WTC11 (cell line): ENCODE measurements at regions of chr22 and their contacts with region 1.

Region 1: DNA sequence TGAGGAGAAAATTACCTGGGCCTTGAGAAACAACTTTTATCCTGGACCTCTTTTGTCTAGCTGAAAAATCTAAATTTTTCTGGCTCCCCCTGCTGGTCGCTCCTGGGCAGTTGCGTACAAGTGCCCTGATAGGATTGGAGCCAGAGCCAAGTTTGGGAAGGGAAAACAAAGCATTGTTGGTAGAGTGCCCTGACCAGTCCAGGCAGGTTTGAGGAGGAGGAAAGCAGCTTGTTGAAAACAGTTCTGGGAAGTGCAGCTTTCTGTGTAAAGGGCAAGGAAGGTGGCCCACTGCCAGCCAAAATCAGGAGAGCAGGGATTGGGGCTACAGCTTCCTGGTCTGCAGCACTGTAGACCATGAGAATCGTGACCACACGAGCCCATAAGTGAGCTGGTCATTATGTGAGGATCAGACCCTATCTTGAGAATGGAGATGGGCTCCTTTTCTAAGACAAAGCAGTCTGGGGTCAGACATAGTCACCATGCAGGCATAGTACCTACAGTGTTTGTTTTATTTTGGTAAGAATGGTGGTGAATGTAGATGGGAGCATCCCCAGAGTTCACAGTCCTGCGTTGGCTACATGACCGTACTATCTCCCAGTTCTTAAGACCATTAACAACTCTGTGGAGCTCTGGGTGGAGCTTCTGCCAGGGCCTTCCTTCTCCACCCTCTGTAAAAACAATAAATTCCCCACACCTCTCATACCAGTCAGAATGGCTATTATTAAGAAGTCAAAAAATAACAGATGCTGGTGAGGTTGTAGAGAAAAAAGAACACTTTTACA is 21.3 kb upstream of the PIK3IP1 start:
- DNase-seq: peak; percentile 80
- ATAC-seq: peak; percentile 99
- H3K4me3 Mint-ChIP-seq: no peak overlapping the region
- H3K27ac Mint-ChIP-seq: peak overlapping the region; percentile 77
- H3K4me1 Mint-ChIP-seq: peaks cover 5% of the 10 kb centered on the region
- H3K27me3 Mint-ChIP-seq: peaks cover 3% of the 10 kb centered on the region
- CTCF ChIP-seq: peak; percentile 74

Region 2: DNA sequence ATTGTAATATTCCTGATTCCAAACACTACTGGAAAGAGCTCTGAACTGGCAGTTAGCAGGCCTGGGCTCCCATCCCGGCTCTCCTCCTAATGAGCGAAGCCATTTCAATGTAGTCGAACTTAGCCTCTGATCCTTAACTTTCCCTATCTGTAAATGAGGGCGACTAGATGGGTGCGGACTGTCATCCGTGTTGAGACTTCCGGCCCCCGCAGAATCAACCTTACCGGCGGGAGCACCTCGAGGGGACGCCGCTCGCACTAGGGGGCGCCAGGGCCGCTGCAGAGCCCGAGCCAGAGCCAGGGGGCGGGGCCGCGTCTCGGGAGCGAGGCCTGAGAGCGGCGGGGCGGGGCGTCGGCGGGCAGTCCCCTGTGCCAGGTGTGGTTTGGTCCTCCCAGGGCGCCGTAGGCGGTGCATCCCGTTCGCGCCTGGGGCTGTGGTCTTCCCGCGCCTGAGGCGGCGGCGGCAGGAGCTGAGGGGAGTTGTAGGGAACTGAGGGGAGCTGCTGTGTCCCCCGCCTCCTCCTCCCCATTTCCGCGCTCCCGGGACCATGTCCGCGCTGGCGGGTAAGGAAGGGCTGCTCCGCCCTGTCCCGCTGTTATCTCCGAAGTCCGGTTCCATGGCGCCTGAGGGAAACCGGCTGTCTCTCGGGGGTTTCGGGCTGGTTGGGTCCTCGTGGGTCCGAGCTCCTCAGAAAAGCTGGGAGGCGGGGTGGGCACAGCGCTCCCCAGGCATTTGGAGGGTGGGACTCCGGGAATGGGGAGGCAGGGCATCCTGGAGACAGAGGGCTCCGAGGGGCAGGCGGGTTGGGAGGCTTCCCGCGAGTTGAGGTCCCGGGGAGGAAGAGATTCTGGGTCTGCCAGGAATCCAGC is 101.5 kb before region 1 on chr22 and contains the start of gene LIMK2:
- CTCF ChIA-PET with region 1: interaction called, 10 read pairs
- POLR2A ChIA-PET with region 1: interaction called, 5 read pairs
- DNase-seq: peak; percentile 97
- ATAC-seq: peak; percentile 96
- H3K4me3 Mint-ChIP-seq: peak within 1 kb of the TSS; percentile 88
- H3K27ac Mint-ChIP-seq: no peak within 1 kb of the TSS
- H3K4me1 Mint-ChIP-seq: peaks cover 20% of the 10 kb centered on the region
- H3K27me3 Mint-ChIP-seq: no peaks in the 10 kb centered on the region
- CTCF ChIP-seq: peak; percentile 38; the same call in 1 of the 2 replicates
- total RNA-seq, gene LIMK2: 33.1 to 42.8 TPM (median 33.6 TPM) in 3 replicates

Region 3: GRCh38 chr22:31284281-31285155 is 29.0 kb before region 1 on chr22:
- CTCF ChIA-PET with region 1: interaction called, 22 read pairs
- POLR2A ChIA-PET with region 1: no interaction called
- DNase-seq: no peak
- ATAC-seq: peak; percentile 35
- H3K4me3 Mint-ChIP-seq: no peak overlapping the region
- H3K27ac Mint-ChIP-seq: peak overlapping the region; percentile 49
- H3K4me1 Mint-ChIP-seq: peaks cover 11% of the 10 kb centered on the region
- H3K27me3 Mint-ChIP-seq: peaks cover 2% of the 10 kb centered on the region
- CTCF ChIP-seq: no peak

Region 4: DNA sequence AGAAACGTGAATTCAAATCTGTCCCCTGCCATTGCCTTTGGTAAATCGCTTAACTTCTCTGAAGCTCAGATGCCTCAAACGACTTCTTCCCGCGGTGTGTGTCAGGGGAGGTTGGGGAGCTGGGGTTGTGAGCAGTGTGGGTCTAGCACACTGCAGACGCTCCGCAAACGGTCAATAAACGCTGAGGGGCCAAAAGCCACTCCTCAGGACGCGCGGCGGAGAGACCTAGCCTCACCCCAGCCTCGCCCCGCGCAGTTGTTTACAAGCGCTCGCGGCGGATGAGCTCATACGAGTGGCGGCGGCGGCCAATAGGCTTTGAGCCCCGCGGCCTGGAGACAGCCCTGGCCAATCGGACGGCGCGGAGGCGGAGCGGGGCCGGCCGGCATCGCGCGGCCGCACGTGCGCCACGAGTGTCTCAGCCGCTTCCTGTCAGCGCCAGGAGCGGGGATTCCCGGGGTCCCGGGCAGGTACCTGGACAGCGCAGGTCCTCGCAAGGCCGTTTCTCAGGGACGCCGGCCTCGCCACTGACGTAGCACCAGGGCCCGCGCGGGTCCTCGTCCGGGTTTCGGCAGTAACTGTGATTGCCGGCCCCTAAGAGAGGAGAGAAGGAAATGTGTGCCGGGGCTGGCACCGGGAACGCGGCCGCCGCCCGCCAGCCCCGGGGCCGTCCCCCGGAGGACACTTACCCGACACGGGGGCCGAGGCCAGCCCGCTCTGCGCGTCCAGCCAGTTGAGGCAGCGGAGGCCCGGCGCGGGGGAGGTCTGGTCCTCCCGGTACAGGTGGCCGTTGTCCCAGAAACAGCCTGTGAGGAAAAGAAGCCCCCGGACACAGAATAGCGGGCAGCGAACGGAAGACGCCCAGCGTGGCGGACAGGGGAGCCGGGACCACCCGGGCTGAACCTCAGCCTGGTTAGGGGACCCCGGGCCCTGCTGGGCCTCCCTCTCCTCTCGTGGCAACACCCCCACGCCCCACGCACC is 22.8 kb before region 1 on chr22:
- CTCF ChIA-PET with region 1: interaction called, 64 read pairs
- POLR2A ChIA-PET with region 1: interaction called, 6 read pairs
- DNase-seq: peak; percentile 92
- ATAC-seq: peak; percentile 88
- H3K4me3 Mint-ChIP-seq: peak overlapping the region; percentile 74
- H3K27ac Mint-ChIP-seq: peak overlapping the region; percentile 71
- H3K4me1 Mint-ChIP-seq: peaks cover 26% of the 10 kb centered on the region
- H3K27me3 Mint-ChIP-seq: peaks cover 25% of the 10 kb centered on the region
- CTCF ChIP-seq: no peak

Region 5: GRCh38 chr22:31295831-31296657 is 17.5 kb before region 1 on chr22:
- CTCF ChIA-PET with region 1: interaction called, 64 read pairs
- POLR2A ChIA-PET with region 1: interaction called, 6 read pairs
- DNase-seq: no peak
- ATAC-seq: no peak
- H3K4me3 Mint-ChIP-seq: no peak overlapping the region
- H3K27ac Mint-ChIP-seq: no peak overlapping the region
- H3K4me1 Mint-ChIP-seq: peaks cover 20% of the 10 kb centered on the region
- H3K27me3 Mint-ChIP-seq: peaks cover 9% of the 10 kb centered on the region
- CTCF ChIP-seq: no peak

Region 6: DNA sequence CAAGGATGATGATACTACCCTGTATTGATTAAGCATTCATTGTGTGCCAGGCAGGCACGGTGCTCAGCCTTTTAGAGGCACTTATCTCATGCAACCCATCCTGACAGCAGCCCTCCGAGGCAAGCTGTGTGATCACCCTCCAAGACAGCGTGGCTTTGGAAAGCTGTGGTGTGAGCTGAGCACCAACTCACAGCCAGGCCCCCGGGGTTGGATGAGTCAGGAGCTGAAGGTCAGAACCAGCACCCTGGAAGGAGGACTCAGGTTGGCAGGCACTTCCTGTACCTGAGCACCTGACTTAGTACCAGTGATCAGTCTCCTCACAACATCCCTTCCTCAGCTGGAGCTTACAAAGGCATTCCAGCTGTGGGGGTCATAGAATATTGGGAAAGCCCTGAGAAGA is 23.6 kb after region 1 on chr22:
- CTCF ChIA-PET with region 1: interaction called, 11 read pairs
- POLR2A ChIA-PET with region 1: interaction called, 3 read pairs
- DNase-seq: no peak
- ATAC-seq: no peak
- H3K4me3 Mint-ChIP-seq: no peak overlapping the region
- H3K27ac Mint-ChIP-seq: peak overlapping the region; percentile 65
- H3K4me1 Mint-ChIP-seq: peaks cover 27% of the 10 kb centered on the region
- H3K27me3 Mint-ChIP-seq: no peaks in the 10 kb centered on the region
- CTCF ChIP-seq: no peak